ENCODE measurements at regions of chr12 and their contacts with region 1.

Region 1: DNA sequence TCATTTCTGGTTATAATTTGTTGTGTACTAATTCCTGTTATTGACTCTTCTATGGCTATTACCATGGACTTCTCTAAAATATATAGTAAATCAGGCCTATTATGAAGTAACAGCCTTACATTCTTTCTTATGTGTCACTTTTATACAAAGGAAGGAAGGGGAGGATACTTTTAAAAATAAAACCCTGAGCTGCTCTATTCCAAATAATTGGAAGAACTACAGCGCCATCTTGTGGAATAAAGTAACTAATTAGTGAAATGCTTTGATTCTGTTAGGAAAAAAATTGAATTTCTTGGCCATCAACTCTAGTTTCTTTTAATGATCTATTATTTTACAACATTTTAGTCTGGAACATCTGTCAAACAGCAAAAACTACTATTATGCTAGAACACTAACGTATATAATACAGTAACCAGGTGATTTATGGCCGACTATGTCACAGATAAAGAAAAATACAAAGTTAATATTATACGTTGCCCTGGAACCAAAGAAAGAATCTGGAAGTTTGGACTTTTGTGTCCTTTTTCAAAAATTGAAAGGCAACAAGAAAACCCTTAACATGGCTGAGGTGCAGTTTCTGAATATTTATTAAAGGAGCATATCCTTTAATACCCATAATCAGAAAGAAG is 55.0 kb upstream of the NELL2 start:
- DNase-seq: peak; percentile 58
- ATAC-seq: no peak
- H3K4me3 ChIP-seq: no peak overlapping the region
- H3K4me3 Mint-ChIP-seq: no peak overlapping the region
- H3K27ac ChIP-seq: no peak overlapping the region
- H3K27ac Mint-ChIP-seq: no peak overlapping the region
- H3K4me1 ChIP-seq: no peaks in the 10 kb centered on the region
- H3K4me1 Mint-ChIP-seq: no peaks in the 10 kb centered on the region
- H3K27me3 ChIP-seq: no peaks in the 10 kb centered on the region
- H3K27me3 Mint-ChIP-seq: peaks cover 2% of the 10 kb centered on the region
- CTCF ChIP-seq: peak; percentile 86

Region 2: DNA sequence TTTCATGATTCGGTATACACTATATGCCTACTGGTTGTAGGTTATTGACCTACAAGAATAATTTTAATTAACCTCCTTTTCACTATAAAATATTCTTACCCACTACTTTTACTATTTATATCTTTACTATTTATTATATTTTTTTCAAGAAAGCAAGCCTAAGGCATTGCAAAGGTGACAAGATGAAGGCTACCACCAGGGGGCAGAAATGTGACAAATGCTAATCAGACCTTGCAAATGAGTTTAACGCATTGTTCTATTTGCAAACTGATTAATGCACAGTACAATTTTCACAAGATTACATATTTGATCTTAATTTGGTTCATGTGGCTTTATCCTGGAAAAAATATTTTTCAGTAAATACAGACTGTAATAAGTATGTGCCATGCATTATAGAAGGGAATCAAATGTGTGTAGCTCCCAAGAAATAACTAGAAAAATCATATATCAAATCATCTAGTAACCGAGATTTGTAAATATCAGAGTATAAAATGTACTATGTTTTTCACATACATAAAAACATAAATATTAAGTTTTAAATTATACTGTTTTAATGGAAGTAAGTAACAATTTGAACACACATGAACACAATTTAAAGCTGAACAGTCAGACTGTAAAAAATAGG is 1486.0 kb before region 1 on chr12:
- CTCF ChIA-PET with region 1: interaction called, 3 read pairs
- POLR2A ChIA-PET with region 1: no interaction called
- intact Hi-C with region 1: loop called (anchors 10 kb)
- DNase-seq: peak; percentile 44
- ATAC-seq: no peak
- H3K4me3 ChIP-seq: no peak overlapping the region
- H3K4me3 Mint-ChIP-seq: no peak overlapping the region
- H3K27ac ChIP-seq: no peak overlapping the region
- H3K27ac Mint-ChIP-seq: no peak overlapping the region
- H3K4me1 ChIP-seq: no peaks in the 10 kb centered on the region
- H3K4me1 Mint-ChIP-seq: no peaks in the 10 kb centered on the region
- H3K27me3 ChIP-seq: no peaks in the 10 kb centered on the region
- H3K27me3 Mint-ChIP-seq: no peaks in the 10 kb centered on the region
- CTCF ChIP-seq: peak; percentile 88

Region 3: GRCh38 chr12:44015335-44015941 is 915.6 kb before region 1 on chr12:
- CTCF ChIA-PET with region 1: interaction called, 55 read pairs
- POLR2A ChIA-PET with region 1: no interaction called
- intact Hi-C with region 1: no loop called
- DNase-seq: peak; percentile 48
- ATAC-seq: peak; percentile 28
- H3K4me3 ChIP-seq: no peak overlapping the region
- H3K4me3 Mint-ChIP-seq: no peak overlapping the region
- H3K27ac ChIP-seq: no peak overlapping the region
- H3K27ac Mint-ChIP-seq: no peak overlapping the region
- H3K4me1 ChIP-seq: no peaks in the 10 kb centered on the region
- H3K4me1 Mint-ChIP-seq: peaks cover 1% of the 10 kb centered on the region
- H3K27me3 ChIP-seq: no peaks in the 10 kb centered on the region
- H3K27me3 Mint-ChIP-seq: no peaks in the 10 kb centered on the region
- CTCF ChIP-seq: peak; percentile 76

Region 4: DNA sequence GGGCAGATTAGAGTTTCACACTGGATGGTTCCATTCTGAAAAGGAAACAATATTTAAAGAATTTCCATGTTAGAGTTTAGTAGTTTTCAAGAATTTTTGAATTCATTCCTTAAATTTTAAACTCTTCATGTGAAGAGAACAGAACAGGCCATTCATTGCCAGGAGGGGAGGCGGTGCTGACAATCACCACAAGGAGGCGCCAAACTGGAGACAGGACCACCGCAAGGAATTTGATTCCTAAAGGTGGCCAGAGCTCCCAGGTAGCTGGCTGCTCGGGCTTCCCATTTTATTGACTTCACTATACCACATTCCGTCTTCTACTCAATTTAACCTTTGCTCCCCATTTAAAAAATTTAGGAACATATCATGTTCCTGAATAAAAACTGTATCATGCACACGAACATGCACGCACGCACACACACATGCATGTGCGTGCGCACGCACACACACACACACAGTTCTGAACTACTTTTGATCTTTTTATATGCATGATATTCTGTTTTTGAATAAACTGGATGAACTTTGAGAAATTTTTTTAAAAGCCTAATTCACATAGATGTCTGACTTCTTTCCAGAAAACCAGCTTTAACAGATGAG is 156.2 kb before region 1 on chr12:
- CTCF ChIA-PET with region 1: interaction called, 20 read pairs
- POLR2A ChIA-PET with region 1: no interaction called
- intact Hi-C with region 1: loop called (anchors 1 kb)
- DNase-seq: peak; percentile 30
- ATAC-seq: no peak
- H3K4me3 ChIP-seq: no peak overlapping the region
- H3K4me3 Mint-ChIP-seq: no peak overlapping the region
- H3K27ac ChIP-seq: no peak overlapping the region
- H3K27ac Mint-ChIP-seq: no peak overlapping the region
- H3K4me1 ChIP-seq: no peaks in the 10 kb centered on the region
- H3K4me1 Mint-ChIP-seq: no peaks in the 10 kb centered on the region
- H3K27me3 ChIP-seq: no peaks in the 10 kb centered on the region
- H3K27me3 Mint-ChIP-seq: peaks cover 3% of the 10 kb centered on the region
- CTCF ChIP-seq: peak; percentile 82

Region 5: DNA sequence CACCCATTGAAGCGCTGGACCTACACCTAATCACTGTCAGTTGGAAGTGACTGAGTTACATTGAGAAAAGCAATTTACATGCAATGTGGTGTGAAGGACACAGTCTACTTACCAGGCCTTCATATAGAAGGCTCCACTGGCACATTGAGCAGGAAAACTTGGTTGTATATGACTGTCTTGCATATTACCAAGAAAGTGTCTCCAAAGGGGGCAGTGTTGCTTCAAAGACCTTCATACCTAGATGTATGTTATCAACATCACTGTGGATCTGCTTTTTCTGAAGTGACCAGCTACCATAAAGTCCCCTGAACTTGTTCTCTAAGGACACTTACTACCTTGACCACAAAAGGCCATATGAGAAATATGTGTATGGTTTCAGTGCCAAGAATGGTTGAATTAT is 119.0 kb before region 1 on chr12:
- CTCF ChIA-PET with region 1: interaction called, 18 read pairs
- POLR2A ChIA-PET with region 1: no interaction called
- intact Hi-C with region 1: loop called (anchors 1 kb)
- DNase-seq: peak; percentile 31
- ATAC-seq: no peak
- H3K4me3 ChIP-seq: no peak overlapping the region
- H3K4me3 Mint-ChIP-seq: no peak overlapping the region
- H3K27ac ChIP-seq: no peak overlapping the region
- H3K27ac Mint-ChIP-seq: no peak overlapping the region
- H3K4me1 ChIP-seq: no peaks in the 10 kb centered on the region
- H3K4me1 Mint-ChIP-seq: no peaks in the 10 kb centered on the region
- H3K27me3 ChIP-seq: no peaks in the 10 kb centered on the region
- H3K27me3 Mint-ChIP-seq: no peaks in the 10 kb centered on the region
- CTCF ChIP-seq: peak; percentile 29

Region 6: DNA sequence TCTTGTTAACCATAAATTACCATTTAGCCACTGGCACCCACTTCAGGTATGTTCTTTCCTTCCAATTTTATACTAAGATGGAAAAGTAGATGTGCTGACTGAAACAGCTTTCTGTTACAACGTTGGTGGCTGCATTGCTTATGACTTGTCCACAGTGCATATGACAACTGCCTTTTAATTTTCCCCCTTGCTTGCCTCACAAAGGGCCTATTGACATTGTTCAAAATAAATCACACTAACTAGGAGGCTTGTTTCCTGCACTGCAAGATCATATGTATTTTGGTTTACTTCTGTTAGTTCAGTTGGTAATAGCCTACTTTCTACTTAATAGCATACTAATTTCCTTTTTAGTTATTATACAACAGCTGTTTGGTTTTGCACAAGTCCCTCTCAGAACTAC is 1003.9 kb after region 1 on chr12:
- CTCF ChIA-PET with region 1: no interaction called
- POLR2A ChIA-PET with region 1: no interaction called
- intact Hi-C with region 1: no loop called
- DNase-seq: no peak
- ATAC-seq: no peak
- H3K4me3 ChIP-seq: no peak overlapping the region
- H3K4me3 Mint-ChIP-seq: no peak overlapping the region
- H3K27ac ChIP-seq: no peak overlapping the region
- H3K27ac Mint-ChIP-seq: no peak overlapping the region
- H3K4me1 ChIP-seq: no peaks in the 10 kb centered on the region
- H3K4me1 Mint-ChIP-seq: no peaks in the 10 kb centered on the region
- H3K27me3 ChIP-seq: no peaks in the 10 kb centered on the region
- H3K27me3 Mint-ChIP-seq: no peaks in the 10 kb centered on the region
- CTCF ChIP-seq: no peak

Measured in B cell (primary cell).